Caco-2 (cell line): ENCODE measurements at regions of chr20 and their contacts with region 1.

Region 1: DNA sequence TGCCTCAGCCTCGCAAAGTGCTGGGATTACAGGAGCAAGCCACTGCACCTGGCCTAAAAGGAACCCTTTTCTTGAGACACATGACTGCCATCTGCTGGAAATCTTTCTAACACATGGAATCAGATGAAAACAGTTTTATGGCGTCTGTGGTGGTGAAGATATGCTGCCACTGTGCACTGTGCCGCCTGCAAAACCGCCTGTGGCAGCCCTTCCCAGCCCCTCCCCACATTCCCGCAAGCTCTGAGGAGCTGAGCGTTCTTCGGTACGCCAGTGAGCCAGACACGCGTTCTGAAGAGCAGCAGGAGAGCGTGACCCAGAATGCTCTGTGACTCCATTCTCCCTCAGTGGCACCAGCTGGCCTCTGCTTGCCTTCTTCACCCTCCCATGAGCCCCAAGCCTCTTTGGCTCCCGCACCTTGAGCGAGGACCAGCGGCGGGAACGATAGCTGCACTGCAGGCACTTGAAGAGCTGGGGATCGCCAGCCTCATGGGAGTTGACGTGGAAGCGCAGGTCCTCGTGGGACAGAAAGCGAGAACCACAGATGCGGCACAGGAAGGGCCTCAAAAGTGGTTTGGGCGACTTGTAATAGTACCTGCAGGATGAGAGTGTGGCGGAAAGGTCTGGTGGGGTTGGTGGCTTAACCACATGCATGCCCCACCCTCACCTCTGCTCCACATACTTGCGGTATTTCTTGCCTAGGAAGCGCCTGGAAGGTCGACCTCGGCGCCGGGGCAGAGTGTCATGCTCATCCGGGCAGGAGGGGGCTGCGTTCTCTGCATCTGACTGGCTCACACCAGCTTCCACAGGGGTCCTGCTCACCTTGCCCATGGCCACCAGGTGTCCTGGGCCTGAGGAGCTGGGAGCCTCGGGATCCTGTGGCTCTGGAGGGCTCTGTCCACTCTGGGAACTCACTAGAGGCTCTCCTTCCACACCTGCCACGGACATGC is 8.7 kb downstream of the ZNF335 start:
- DNase-seq: peak; percentile 77 to 78
- H3K4me3 ChIP-seq: no peak overlapping the region
- H3K4me3 Mint-ChIP-seq: no peak overlapping the region
- H3K27ac Mint-ChIP-seq: no peak overlapping the region
- H3K4me1 ChIP-seq: no peaks in the 10 kb centered on the region
- H3K4me1 Mint-ChIP-seq: no peaks in the 10 kb centered on the region
- H3K27me3 ChIP-seq: no peaks in the 10 kb centered on the region
- H3K27me3 Mint-ChIP-seq: no peaks in the 10 kb centered on the region
- CTCF ChIP-seq: peak; percentile 70 to 88

Region 2: GRCh38 chr20:45798935-45799642 is 164.2 kb before region 1 on chr20:
- CTCF ChIA-PET with region 1: interaction called, 5 read pairs
- POLR2A ChIA-PET with region 1: no interaction called
- intact Hi-C with region 1: loop called (anchors 1 kb)
- DNase-seq: peak; percentile 81 to 89
- H3K4me3 ChIP-seq: no peak overlapping the region
- H3K4me3 Mint-ChIP-seq: no peak overlapping the region
- H3K27ac Mint-ChIP-seq: no peak overlapping the region
- H3K4me1 ChIP-seq: no peaks in the 10 kb centered on the region
- H3K4me1 Mint-ChIP-seq: no peaks in the 10 kb centered on the region
- H3K27me3 ChIP-seq: no peaks in the 10 kb centered on the region
- H3K27me3 Mint-ChIP-seq: no peaks in the 10 kb centered on the region
- CTCF ChIP-seq: peak; percentile 94 to 96

Region 3: GRCh38 chr20:45948742-45949541 is 14.4 kb before region 1 on chr20:
- CTCF ChIA-PET with region 1: interaction called, 3 read pairs
- POLR2A ChIA-PET with region 1: interaction called, 17 read pairs
- intact Hi-C with region 1: no loop called
- DNase-seq: peak in 1 of 2 experiments; percentile 57
- H3K4me3 ChIP-seq: no peak overlapping the region
- H3K4me3 Mint-ChIP-seq: no peak overlapping the region
- H3K27ac Mint-ChIP-seq: peak overlapping the region; percentile 9
- H3K4me1 ChIP-seq: no peaks in the 10 kb centered on the region
- H3K4me1 Mint-ChIP-seq: no peaks in the 10 kb centered on the region
- H3K27me3 ChIP-seq: no peaks in the 10 kb centered on the region
- H3K27me3 Mint-ChIP-seq: no peaks in the 10 kb centered on the region
- CTCF ChIP-seq: no peak

Region 4: DNA sequence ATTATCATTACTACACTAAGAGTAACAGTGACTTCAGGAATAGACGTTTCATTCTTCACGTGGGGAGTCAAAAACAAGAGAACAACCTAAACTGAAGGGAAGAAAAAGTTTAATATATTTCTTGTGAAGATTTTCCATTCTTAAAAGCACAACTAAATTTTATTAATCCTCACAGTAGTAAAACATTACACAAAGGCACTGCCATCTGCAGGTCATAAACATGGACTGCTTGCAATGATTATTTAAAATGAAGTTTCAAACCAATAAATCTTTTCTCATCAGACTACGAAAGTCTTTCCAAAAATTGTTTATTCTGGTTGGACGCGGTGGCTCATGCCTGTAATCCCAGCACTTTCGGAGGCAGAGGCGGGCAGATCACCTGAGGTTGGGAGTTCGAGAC is 123.8 kb after region 1 on chr20:
- CTCF ChIA-PET with region 1: no interaction called
- POLR2A ChIA-PET with region 1: no interaction called
- intact Hi-C with region 1: no loop called
- DNase-seq: no peak
- H3K4me3 ChIP-seq: no peak overlapping the region
- H3K4me3 Mint-ChIP-seq: peak overlapping the region; percentile 12
- H3K27ac Mint-ChIP-seq: no peak overlapping the region
- H3K4me1 ChIP-seq: peaks cover 30% of the 10 kb centered on the region
- H3K4me1 Mint-ChIP-seq: peaks cover 40% of the 10 kb centered on the region
- H3K27me3 ChIP-seq: no peaks in the 10 kb centered on the region
- H3K27me3 Mint-ChIP-seq: no peaks in the 10 kb centered on the region
- CTCF ChIP-seq: peak; percentile 37 to 40

Region 5: DNA sequence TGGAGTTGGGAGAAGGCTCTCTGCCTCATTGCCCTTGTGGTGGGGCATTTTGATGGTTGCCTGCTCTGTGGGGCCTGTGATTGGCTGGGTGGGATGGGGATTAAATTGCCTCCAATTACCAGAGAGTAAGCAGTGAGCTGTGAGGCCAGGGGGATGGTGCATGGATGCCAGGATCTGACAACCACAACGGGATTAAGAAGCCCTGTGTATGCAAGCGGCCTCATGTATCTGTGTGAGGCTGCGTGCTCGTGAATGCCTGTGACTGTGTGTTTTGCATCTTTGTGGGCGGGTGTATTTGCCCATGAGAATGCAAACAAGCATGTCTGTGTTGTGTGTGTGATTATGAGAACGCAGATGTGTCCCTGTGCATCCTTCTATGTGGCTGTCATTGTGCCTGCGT is 200.9 kb after region 1 on chr20:
- CTCF ChIA-PET with region 1: no interaction called
- POLR2A ChIA-PET with region 1: no interaction called
- intact Hi-C with region 1: no loop called
- DNase-seq: no peak
- H3K4me3 ChIP-seq: no peak overlapping the region
- H3K4me3 Mint-ChIP-seq: no peak overlapping the region
- H3K27ac Mint-ChIP-seq: no peak overlapping the region
- H3K4me1 ChIP-seq: no peaks in the 10 kb centered on the region
- H3K4me1 Mint-ChIP-seq: no peaks in the 10 kb centered on the region
- H3K27me3 ChIP-seq: peaks cover 2% of the 10 kb centered on the region; the same call in 1 of the 2 replicates
- H3K27me3 Mint-ChIP-seq: peaks cover 22% of the 10 kb centered on the region
- CTCF ChIP-seq: no peak